ENCODE measurements at regions of chr11 and their contacts with region 1.

Region 1: DNA sequence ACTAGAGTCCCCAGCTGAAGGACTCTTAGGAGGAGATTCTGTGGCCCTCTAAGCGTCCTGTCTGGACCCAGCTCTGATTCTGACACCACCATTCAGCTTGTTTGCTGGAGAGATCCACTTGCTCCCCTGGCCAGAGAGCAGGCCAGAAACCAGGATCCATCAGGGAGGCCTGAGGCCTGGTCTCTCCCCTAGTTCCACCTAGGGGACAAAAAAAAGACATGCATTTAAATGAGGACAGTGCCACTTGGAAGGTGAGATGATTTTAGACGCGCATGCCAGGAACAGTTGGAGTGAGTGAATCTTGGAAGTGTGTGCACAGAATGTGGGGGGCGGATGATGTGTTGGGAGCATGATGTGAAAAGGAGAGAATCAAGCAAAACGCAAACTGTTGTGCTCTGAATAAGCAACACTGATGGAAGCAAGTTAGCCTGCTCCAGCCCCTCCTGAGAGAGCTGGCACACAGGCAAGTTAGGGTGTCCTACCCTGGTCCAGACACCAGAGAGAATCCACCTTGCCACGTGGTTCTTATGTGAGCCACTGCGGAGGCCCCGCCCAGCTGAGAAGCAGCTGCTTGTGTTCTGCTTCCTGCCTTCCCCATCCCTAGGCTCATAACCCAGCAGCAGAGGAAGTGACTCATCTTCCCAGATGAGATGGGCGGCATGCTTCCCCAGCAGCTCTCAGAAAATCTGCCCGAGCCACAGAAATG is 8.0 kb upstream of the SLCO2B1 start:
- DNase-seq: peak; percentile 88
- ATAC-seq: peak; percentile 97
- H3K4me3 Mint-ChIP-seq: peak overlapping the region; percentile 20
- H3K27ac Mint-ChIP-seq: peak overlapping the region; percentile 78
- H3K4me1 Mint-ChIP-seq: peaks cover 30% of the 10 kb centered on the region
- H3K27me3 Mint-ChIP-seq: peaks cover 2% of the 10 kb centered on the region

Region 2: GRCh38 chr11:74826901-74827300 is 316.0 kb before region 1 on chr11:
- CTCF ChIA-PET with region 1: no interaction called
- POLR2A ChIA-PET with region 1: no interaction called
- intact Hi-C with region 1: no loop called
- DNase-seq: peak; percentile 19
- ATAC-seq: no peak
- H3K4me3 Mint-ChIP-seq: no peak overlapping the region
- H3K27ac Mint-ChIP-seq: no peak overlapping the region
- H3K4me1 Mint-ChIP-seq: no peaks in the 10 kb centered on the region
- H3K27me3 Mint-ChIP-seq: no peaks in the 10 kb centered on the region

Region 3: GRCh38 chr11:74948898-74949747 is 193.7 kb before region 1 on chr11 and contains the starts of genes SPCS2 and XRRA1:
- CTCF ChIA-PET with region 1: interaction called, 3 read pairs
- POLR2A ChIA-PET with region 1: no interaction called
- intact Hi-C with region 1: loop called in 1 of 2 experiments (anchors 5 kb)
- DNase-seq: peak; percentile 100
- ATAC-seq: peak; percentile 99
- H3K4me3 Mint-ChIP-seq: peak within 1 kb of the TSS; percentile 96
- H3K27ac Mint-ChIP-seq: peak within 1 kb of the TSS; percentile 97
- H3K4me1 Mint-ChIP-seq: peaks cover 42% of the 10 kb centered on the region
- H3K27me3 Mint-ChIP-seq: no peaks in the 10 kb centered on the region
- total RNA-seq, gene SPCS2: 124 to 131 TPM
- total RNA-seq, gene XRRA1: 7.8 to 11.9 TPM

Region 4: DNA sequence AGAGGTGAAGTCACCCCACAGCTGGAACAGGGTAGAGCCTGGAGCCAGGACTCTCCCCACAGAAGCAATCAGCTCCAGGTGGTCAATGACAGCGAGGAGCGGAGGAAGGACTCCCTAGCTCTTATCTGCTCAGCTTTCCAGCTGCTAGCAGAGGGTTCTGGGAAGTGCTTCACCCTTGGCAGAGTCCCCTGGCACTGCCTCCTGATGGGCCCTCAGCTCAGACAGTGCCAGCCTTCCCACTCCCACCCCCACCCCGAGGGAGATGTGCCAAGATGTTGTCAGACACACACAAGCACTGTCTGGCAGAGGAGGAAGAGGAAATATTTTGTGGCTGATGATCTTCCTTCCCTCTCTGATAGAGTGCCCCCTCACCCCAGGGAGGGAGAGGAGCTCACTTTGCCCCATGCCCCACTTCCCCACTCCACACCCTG is 52.3 kb after region 1 on chr11:
- CTCF ChIA-PET with region 1: interaction called, 10 read pairs
- POLR2A ChIA-PET with region 1: no interaction called
- intact Hi-C with region 1: no loop called
- DNase-seq: no peak
- ATAC-seq: no peak
- H3K4me3 Mint-ChIP-seq: no peak overlapping the region
- H3K27ac Mint-ChIP-seq: no peak overlapping the region
- H3K4me1 Mint-ChIP-seq: no peaks in the 10 kb centered on the region
- H3K27me3 Mint-ChIP-seq: no peaks in the 10 kb centered on the region

Region 5: DNA sequence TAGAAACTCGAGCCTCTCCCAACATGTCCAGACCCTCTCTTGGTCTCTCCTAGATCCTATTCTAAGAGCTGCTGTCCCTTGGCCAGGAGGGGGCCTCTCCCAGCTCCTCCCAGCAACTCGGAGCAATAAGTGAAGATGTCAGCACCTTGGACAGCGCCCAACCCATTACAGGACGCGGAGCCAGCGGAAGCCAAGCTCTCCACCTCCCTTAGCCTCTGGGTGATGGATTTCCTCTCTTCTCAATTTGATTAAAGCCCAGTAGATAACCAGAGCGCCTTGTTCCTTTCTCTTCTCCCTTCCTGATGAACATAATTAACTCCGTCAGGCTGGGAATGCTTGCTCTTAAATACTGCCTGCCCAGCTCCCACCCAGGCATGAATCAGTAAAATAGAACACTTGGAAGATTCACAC is 71.5 kb after region 1 on chr11:
- CTCF ChIA-PET with region 1: interaction called, 18 read pairs
- POLR2A ChIA-PET with region 1: no interaction called
- intact Hi-C with region 1: no loop called
- DNase-seq: peak; percentile 90
- ATAC-seq: peak; percentile 71
- H3K4me3 Mint-ChIP-seq: no peak overlapping the region
- H3K27ac Mint-ChIP-seq: no peak overlapping the region
- H3K4me1 Mint-ChIP-seq: no peaks in the 10 kb centered on the region
- H3K27me3 Mint-ChIP-seq: peaks cover 28% of the 10 kb centered on the region

Region 6: DNA sequence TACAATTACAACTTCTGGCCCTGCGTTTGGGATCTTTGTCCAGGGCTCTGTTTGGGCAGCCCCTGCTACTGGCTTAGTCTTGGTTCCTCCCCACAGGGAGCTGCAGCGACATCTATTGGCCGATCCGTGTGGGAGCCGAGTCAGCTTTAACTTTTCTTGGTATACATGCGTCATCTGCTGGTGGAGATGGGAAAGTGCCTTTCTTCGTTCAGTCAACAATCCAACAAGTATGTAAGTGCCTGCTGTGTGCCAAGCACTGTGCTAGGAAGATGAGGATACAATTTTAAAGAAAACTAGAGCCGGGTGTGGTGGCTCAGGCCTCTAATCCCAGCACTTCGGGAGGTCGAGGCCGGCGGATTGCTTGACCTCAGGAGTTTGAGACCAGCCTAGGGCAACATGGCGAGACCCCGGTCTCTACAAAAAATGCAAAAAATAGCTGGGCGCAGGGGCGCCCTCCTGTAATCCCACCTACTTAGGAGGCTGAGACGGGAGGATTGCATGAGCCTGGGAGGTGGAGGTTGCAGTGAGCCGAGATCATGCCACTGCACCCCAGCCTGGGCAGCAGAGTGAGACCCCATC is 105.9 kb after region 1 on chr11:
- CTCF ChIA-PET with region 1: interaction called, 458 read pairs
- POLR2A ChIA-PET with region 1: interaction called, 6 read pairs
- intact Hi-C with region 1: loop called (anchors 1 kb)
- DNase-seq: peak; percentile 93
- ATAC-seq: peak; percentile 98
- H3K4me3 Mint-ChIP-seq: no peak overlapping the region
- H3K27ac Mint-ChIP-seq: no peak overlapping the region
- H3K4me1 Mint-ChIP-seq: no peaks in the 10 kb centered on the region
- H3K27me3 Mint-ChIP-seq: no peaks in the 10 kb centered on the region

Region 7: GRCh38 chr11:75270896-75271418 is 128.1 kb after region 1 on chr11:
- CTCF ChIA-PET with region 1: interaction called, 15 read pairs
- POLR2A ChIA-PET with region 1: no interaction called
- intact Hi-C with region 1: no loop called
- DNase-seq: no peak
- ATAC-seq: no peak
- H3K4me3 Mint-ChIP-seq: no peak overlapping the region
- H3K27ac Mint-ChIP-seq: no peak overlapping the region
- H3K4me1 Mint-ChIP-seq: peaks cover 25% of the 10 kb centered on the region
- H3K27me3 Mint-ChIP-seq: no peaks in the 10 kb centered on the region

Region 8: DNA sequence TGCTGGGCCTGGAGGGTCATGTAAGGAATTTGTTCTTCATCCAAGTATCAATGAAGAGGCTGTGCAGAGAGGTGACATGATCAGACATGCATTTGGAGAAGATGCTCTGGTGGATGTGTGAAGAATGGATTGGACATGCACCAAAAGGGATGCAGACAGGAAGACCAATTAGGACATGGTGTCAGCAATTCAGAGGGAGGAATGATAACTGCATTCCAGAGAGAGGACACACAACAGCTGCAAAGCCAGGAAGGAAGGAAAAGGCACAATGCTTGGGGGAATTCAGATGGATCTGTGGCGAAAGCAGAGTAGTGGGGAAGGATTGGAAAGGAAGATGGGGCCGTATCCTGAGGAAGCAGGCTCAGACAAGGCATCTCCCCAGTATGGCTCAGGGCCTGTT is 213.7 kb after region 1 on chr11:
- CTCF ChIA-PET with region 1: no interaction called
- POLR2A ChIA-PET with region 1: no interaction called
- intact Hi-C with region 1: no loop called
- DNase-seq: no peak
- ATAC-seq: no peak
- H3K4me3 Mint-ChIP-seq: no peak overlapping the region
- H3K27ac Mint-ChIP-seq: no peak overlapping the region
- H3K4me1 Mint-ChIP-seq: peaks cover 17% of the 10 kb centered on the region
- H3K27me3 Mint-ChIP-seq: no peaks in the 10 kb centered on the region

Region 9: DNA sequence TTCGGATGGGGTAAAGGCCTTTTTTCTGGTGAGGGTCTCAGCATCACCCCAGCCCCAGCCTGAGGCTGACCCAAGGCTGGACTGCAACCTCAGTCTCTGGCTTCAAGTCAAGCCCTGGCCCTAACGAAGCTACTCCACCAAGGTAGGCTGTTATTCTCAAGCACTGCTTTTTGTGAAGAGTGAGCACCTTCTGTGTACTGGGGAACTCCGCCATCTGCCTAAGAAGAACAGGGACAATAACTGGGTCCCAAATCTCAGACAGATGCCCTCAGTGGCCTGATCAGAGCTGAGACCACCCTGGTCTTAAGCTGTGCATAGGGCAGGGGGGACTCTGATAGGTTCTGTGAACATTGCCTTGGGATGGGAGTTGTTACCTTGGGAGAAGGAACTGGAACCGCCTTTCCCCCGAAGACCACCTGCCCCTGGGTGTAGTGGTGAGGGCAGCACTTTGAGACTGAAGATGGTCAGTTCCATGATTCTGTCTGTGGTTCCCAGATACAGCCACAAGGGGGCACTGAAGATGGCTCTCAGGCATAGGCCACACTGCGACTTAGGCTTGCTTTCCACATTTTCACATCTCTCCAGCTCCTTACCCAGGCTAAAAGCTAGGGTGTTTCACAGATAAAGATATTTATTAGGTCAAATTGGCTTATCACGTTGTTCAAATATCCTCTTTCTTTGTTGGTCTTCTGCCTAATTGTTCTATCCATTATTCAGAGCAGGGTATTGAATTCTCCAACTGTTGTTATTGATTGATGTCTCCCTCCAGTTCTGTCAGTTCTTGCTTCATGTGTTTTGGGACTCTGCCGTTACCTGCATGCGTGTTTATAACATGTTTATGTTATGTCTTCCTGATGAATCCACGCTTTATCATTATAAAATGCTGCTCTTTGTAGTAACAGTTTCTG is 660.3 kb after region 1 on chr11:
- CTCF ChIA-PET with region 1: no interaction called
- POLR2A ChIA-PET with region 1: no interaction called
- intact Hi-C with region 1: no loop called
- DNase-seq: peak; percentile 84
- ATAC-seq: peak; percentile 92
- H3K4me3 Mint-ChIP-seq: no peak overlapping the region
- H3K27ac Mint-ChIP-seq: no peak overlapping the region
- H3K4me1 Mint-ChIP-seq: peaks cover 10% of the 10 kb centered on the region
- H3K27me3 Mint-ChIP-seq: no peaks in the 10 kb centered on the region